OCI-LY7 (cell line): ENCODE measurements at regions of chr1 and their contacts with region 1.

Region 1: DNA sequence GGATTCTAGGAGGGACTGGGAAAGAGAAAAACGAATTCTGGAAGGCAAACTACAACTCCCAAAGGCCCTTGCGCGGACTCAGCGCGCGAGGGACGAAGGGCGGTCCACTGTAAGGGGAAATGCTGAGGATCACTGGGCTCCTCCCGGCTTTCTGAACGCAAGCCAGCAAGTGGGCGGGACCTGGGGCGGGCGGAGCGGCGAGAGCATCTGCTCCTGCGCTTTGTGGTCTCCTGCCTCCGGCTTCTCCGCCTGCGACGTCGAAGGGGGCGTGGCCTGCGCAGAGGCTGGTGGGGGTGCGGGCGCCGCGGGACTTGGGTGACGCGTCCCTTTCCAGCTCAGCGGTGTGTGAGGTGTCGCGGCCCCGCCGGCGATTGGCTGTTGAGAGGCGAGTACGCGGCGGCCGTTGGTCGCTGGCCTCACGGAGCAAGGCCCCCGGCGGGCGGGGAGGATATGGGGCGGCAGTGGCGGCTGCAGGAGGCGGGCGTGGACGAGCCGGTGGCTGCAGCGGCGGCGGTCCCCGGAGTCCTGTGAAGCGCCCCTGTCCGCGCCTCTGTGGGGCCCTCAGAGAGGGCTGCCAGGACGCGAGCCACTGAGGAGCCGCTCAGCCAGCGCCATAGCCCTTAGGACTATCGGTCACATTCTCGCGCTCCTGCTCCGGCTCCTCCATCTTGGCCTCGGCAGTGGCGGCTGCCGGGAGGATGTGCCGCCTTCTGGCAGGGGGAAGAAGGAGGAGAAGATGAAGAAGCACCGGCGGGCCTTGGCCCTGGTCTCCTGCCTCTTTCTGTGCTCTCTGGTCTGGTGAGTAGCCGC is at the start of gene SUCO:
- DNase-seq: peak; percentile 98
- H3K4me3 ChIP-seq: peak within 1 kb of the TSS; percentile 93
- H3K27ac ChIP-seq: peak within 1 kb of the TSS; percentile 79
- H3K4me1 ChIP-seq: peaks cover 33% of the 10 kb centered on the region
- CTCF ChIP-seq: no peak
- total RNA-seq, gene SUCO: 19.4 and 22.9 TPM in 2 replicates

Region 2: GRCh38 chr1:171485375-171486047 is 1047.4 kb before region 1 on chr1 and contains the start of gene PRRC2C:
- CTCF ChIA-PET with region 1: no interaction called
- POLR2A ChIA-PET with region 1: no interaction called
- intact Hi-C with region 1: loop called (anchors 5 kb)
- DNase-seq: peak; percentile 98
- H3K4me3 ChIP-seq: peak within 1 kb of the TSS; percentile 97
- H3K27ac ChIP-seq: peak within 1 kb of the TSS; percentile 87
- H3K4me1 ChIP-seq: peaks cover 38% of the 10 kb centered on the region
- CTCF ChIP-seq: peak; percentile 86
- total RNA-seq, gene PRRC2C: 73.5 and 75.3 TPM in 2 replicates

Region 3: GRCh38 chr1:171781176-171781875 is 751.6 kb before region 1 on chr1 and contains the start of gene METTL13:
- CTCF ChIA-PET with region 1: no interaction called
- POLR2A ChIA-PET with region 1: no interaction called
- intact Hi-C with region 1: loop called (anchors 1 kb)
- DNase-seq: peak; percentile 98
- H3K4me3 ChIP-seq: peak within 1 kb of the TSS; percentile 93
- H3K27ac ChIP-seq: peak within 1 kb of the TSS; percentile 78
- H3K4me1 ChIP-seq: peaks cover 34% of the 10 kb centered on the region
- CTCF ChIP-seq: no peak
- total RNA-seq, gene METTL13: 22.2 and 28.3 TPM in 2 replicates

Region 4: GRCh38 chr1:172545396-172546004 is 12.6 kb after region 1 on chr1:
- CTCF ChIA-PET with region 1: interaction called, 3 read pairs
- POLR2A ChIA-PET with region 1: interaction called, 27 read pairs
- intact Hi-C with region 1: no loop called
- DNase-seq: peak; percentile 33
- H3K4me3 ChIP-seq: no peak overlapping the region
- H3K27ac ChIP-seq: peak overlapping the region; percentile 1
- H3K4me1 ChIP-seq: peaks cover 31% of the 10 kb centered on the region
- CTCF ChIP-seq: no peak

Region 5: GRCh38 chr1:173112129-173112528 is 579.2 kb after region 1 on chr1:
- CTCF ChIA-PET with region 1: no interaction called
- POLR2A ChIA-PET with region 1: no interaction called
- intact Hi-C with region 1: loop called (anchors 10 kb)
- DNase-seq: peak; percentile 78
- H3K4me3 ChIP-seq: no peak overlapping the region
- H3K27ac ChIP-seq: peak overlapping the region; percentile 29
- H3K4me1 ChIP-seq: peaks cover 28% of the 10 kb centered on the region
- CTCF ChIP-seq: no peak

Region 6: GRCh38 chr1:173714759-173715537 is 1182.0 kb after region 1 on chr1 and contains the start of gene KLHL20:
- CTCF ChIA-PET with region 1: no interaction called
- POLR2A ChIA-PET with region 1: no interaction called
- intact Hi-C with region 1: loop called (anchors 5 kb)
- DNase-seq: peak; percentile 94
- H3K4me3 ChIP-seq: peak within 1 kb of the TSS; percentile 78
- H3K27ac ChIP-seq: peak within 1 kb of the TSS; percentile 77
- H3K4me1 ChIP-seq: peaks cover 23% of the 10 kb centered on the region
- CTCF ChIP-seq: 0 out of 2 replicates have a peak, but pooled peaks have one; percentile 38
- total RNA-seq, gene KLHL20: 17.5 and 28.2 TPM in 2 replicates